Calu3 (cell line): ENCODE measurements at regions of chr5 and their contacts with region 1.

Region 1: GRCh38 chr5:75053304-75054133 is 1.2 kb upstream of the GCNT4 start:
- DNase-seq: peak; percentile 76
- H3K4me3 Mint-ChIP-seq: peak overlapping the region; percentile 79
- H3K27ac Mint-ChIP-seq: peak overlapping the region; percentile 59
- H3K4me1 Mint-ChIP-seq: peaks cover 70% of the 10 kb centered on the region
- H3K27me3 Mint-ChIP-seq: no peaks in the 10 kb centered on the region
- CTCF ChIP-seq: no peak

Region 2: DNA sequence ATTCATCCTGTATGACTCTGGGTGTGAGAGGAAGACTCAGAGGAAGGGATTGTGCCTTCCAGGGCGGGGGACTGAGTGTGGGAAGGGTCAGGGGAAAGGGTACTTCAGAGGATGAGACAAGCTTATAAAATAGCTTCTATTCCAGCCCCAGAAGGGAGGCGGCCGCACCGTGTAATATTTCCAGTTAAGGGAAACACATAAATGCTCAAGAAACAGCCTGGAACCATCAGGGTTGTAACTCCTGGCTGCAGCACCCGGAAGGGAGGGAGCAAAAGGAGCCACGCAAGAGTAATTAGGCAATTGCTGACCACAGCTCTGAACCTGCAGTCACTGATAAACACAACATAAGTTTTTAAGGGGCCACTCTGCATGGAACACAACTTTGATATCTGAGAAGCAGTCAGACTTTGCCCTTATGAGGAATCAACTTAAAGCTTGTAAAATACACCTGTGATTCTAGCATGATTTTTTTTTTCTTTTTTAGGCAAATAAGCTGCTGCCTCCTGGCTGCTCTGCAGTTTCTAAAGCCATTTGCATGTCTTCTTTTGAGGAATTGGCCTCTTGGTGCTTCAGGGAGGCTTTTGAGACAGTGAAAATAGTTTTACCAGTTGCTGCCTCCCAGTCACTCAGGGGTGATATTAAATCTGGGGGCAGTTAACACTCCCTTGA is 795.7 kb before region 1 on chr5:
- CTCF ChIA-PET with region 1: no interaction called
- intact Hi-C with region 1: no loop called
- DNase-seq: peak; percentile 56
- H3K4me3 Mint-ChIP-seq: peak overlapping the region; percentile 22
- H3K27ac Mint-ChIP-seq: peak overlapping the region; percentile 83
- H3K4me1 Mint-ChIP-seq: peaks cover 26% of the 10 kb centered on the region
- H3K27me3 Mint-ChIP-seq: no peaks in the 10 kb centered on the region
- CTCF ChIP-seq: no peak

Region 3: DNA sequence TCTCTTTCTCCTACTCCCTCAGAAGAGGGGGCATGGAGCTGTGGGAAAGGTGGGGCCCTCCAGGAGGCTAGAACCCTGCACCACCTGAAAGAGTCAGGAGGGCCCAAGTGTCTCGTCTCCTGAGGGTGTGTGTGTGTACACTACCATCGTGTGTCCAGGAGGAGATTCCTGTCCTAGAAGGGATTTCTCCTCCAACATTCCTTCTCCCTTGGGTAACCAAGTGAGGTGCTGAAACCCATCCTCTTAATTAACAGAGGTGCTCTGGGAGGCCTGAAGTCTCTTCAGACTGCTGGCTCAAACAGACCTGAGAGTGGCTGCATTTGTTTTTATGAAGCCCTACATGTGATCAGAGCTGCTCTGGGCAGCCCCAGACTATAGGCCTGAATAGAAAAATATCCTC is 126.2 kb before region 1 on chr5:
- CTCF ChIA-PET with region 1: interaction called, 11 read pairs
- intact Hi-C with region 1: no loop called
- DNase-seq: no peak
- H3K4me3 Mint-ChIP-seq: no peak overlapping the region
- H3K27ac Mint-ChIP-seq: no peak overlapping the region
- H3K4me1 Mint-ChIP-seq: peaks cover 8% of the 10 kb centered on the region
- H3K27me3 Mint-ChIP-seq: no peaks in the 10 kb centered on the region
- CTCF ChIP-seq: no peak

Region 4: GRCh38 chr5:74945561-74946165 is 107.9 kb before region 1 on chr5:
- CTCF ChIA-PET with region 1: interaction called, 7 read pairs
- intact Hi-C with region 1: loop called (anchors 5 kb)
- DNase-seq: no peak
- H3K4me3 Mint-ChIP-seq: no peak overlapping the region
- H3K27ac Mint-ChIP-seq: peak overlapping the region; percentile 10
- H3K4me1 Mint-ChIP-seq: peaks cover 60% of the 10 kb centered on the region
- H3K27me3 Mint-ChIP-seq: no peaks in the 10 kb centered on the region
- CTCF ChIP-seq: no peak

Region 5: GRCh38 chr5:75236322-75237316 is 183.1 kb after region 1 on chr5 and contains the start of gene ANKRD31:
- CTCF ChIA-PET with region 1: interaction called, 18 read pairs
- intact Hi-C with region 1: loop called (anchors 10 kb)
- DNase-seq: peak; percentile 94
- H3K4me3 Mint-ChIP-seq: peak within 1 kb of the TSS; percentile 69
- H3K27ac Mint-ChIP-seq: peak within 1 kb of the TSS; percentile 81
- H3K4me1 Mint-ChIP-seq: peaks cover 30% of the 10 kb centered on the region
- H3K27me3 Mint-ChIP-seq: no peaks in the 10 kb centered on the region
- CTCF ChIP-seq: peak; percentile 85
- total RNA-seq, gene ANKRD31: 1.5 and 1.7 TPM in 2 replicates

Region 6: DNA sequence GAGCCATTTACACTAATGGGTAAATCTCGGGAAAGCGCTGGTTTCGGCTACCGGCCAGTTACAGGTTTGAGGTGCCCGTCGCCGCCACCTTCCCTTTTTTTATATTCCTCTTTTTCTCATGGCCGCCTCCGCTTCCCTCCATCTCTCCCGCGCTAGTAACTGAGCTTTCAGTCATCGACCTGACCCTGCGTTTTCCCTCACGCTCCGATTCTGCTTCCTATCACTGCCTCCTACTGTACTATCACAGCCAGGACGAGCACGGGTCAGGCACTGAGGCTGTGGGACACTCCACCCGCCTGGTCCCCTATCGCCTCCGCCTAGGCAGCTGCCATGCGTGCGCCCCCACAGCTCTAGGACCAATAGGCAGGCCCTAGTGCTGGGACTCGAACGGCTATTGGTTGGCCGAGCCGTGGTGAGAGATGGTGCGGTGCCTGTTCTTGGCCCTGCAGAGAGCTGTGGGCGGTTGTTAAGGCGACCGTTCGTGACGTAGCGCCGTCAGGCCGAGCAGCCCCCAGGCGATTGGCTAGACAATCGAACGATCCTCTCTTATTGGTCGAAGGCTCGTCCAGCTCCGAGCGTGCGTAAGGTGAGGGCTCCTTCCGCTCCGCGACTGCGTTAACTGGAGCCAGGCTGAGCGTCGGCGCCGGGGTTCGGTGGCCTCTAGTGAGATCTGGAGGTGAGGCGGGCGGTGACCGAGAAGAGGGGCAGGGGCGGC is 283.3 kb after region 1 on chr5 and contains the start of gene HMGCR:
- CTCF ChIA-PET with region 1: interaction called, 4 read pairs
- intact Hi-C with region 1: loop called (anchors 5 kb)
- DNase-seq: peak; percentile 99
- H3K4me3 Mint-ChIP-seq: no peak within 1 kb of the TSS
- H3K27ac Mint-ChIP-seq: no peak within 1 kb of the TSS
- H3K4me1 Mint-ChIP-seq: peaks cover 16% of the 10 kb centered on the region
- H3K27me3 Mint-ChIP-seq: no peaks in the 10 kb centered on the region
- CTCF ChIP-seq: no peak
- total RNA-seq, gene HMGCR: 188 and 224 TPM in 2 replicates